ENCODE measurements at regions of chr2 and their contacts with region 1.

Region 1: GRCh38 chr2:105114551-105114950 is 76.7 kb downstream of the MRPS9 start:
- DNase-seq: no peak
- H3K4me3 Mint-ChIP-seq: no peak overlapping the region
- H3K27ac Mint-ChIP-seq: no peak overlapping the region
- H3K4me1 Mint-ChIP-seq: no peaks in the 10 kb centered on the region
- H3K27me3 Mint-ChIP-seq: no peaks in the 10 kb centered on the region

Region 2: GRCh38 chr2:105238664-105239240 is 124.2 kb after region 1 on chr2:
- intact Hi-C with region 1: loop called (anchors 1 kb)
- DNase-seq: no peak
- H3K4me3 Mint-ChIP-seq: no peak overlapping the region
- H3K27ac Mint-ChIP-seq: no peak overlapping the region
- H3K4me1 Mint-ChIP-seq: no peaks in the 10 kb centered on the region
- H3K27me3 Mint-ChIP-seq: peaks cover 13% of the 10 kb centered on the region

Region 3: GRCh38 chr2:105294844-105295481 is 180.4 kb after region 1 on chr2:
- intact Hi-C with region 1: no loop called
- DNase-seq: no peak
- H3K4me3 Mint-ChIP-seq: no peak overlapping the region
- H3K27ac Mint-ChIP-seq: no peak overlapping the region
- H3K4me1 Mint-ChIP-seq: peaks cover 2% of the 10 kb centered on the region
- H3K27me3 Mint-ChIP-seq: no peaks in the 10 kb centered on the region

Region 4: DNA sequence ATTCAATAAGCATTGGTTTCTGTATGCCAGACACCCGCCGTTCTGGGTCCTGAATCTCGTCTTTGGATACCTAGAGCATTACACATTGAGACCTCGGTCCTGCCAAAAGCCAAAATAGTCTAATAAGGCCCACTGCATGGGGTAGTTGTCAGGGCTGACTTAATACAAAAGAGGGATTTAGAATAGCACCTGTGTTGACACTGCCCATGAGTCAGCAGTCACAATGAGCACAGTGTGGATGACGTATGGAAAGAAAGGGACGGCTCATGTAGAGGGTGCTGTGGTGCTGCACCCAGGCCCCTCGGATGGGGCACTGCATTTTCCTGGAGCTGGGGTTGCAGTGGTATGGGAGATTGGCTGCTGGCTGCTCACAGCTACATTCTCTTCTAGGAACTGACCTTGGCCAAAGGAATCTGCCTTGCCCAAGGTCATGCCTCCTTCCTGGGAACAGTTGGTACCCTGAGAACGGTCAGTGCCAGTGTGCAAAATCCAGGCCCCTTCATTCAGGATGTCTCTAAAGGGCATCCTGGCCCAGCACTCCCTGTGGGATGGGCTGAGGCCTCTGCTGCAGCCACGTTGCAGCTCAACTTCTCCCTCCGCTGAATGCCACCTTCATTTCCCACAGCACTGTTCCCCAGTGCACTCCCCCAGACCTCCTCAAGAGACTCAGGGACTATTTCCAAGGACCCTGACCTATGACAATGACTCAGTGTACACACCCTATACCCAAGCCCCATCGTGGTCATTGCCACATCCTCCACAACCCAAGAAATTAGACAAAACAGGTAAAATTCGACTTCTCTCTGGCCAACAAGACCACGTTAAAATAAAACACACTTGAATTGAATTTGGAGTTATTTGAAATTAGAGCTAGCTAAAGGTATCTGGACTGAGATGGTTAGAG is 503.5 kb after region 1 on chr2:
- intact Hi-C with region 1: no loop called
- DNase-seq: no peak
- H3K4me3 Mint-ChIP-seq: no peak overlapping the region
- H3K27ac Mint-ChIP-seq: no peak overlapping the region
- H3K4me1 Mint-ChIP-seq: peaks cover 5% of the 10 kb centered on the region
- H3K27me3 Mint-ChIP-seq: peaks cover 7% of the 10 kb centered on the region

Measured in activated T-helper 2 cell treated with anti-CD3 and anti-CD28 coated beads, Interferon-gamma antibody, Interleukin-2, Interleukin-4, amounts not matched to agents 10 μg/mL and 5 μg/mL and 100 μg/mL, durations not matched to agents 14 hours and 24 hours and 36 hours (primary cell).